ENCODE measurements at regions of chr19 and their contacts with region 1.

Region 1: GRCh38 chr19:12052497-12053169 is at the start of gene ZNF878:
- H3K4me3 Mint-ChIP-seq: peak within 1 kb of the TSS; percentile 82
- H3K27ac Mint-ChIP-seq: peak within 1 kb of the TSS; percentile 34
- H3K4me1 Mint-ChIP-seq: peaks cover 22% of the 10 kb centered on the region
- H3K27me3 Mint-ChIP-seq: peaks cover 55% of the 10 kb centered on the region

Region 2: GRCh38 chr19:11887611-11888531 is 164.8 kb before region 1 on chr19 and contains the start of gene ZNF69:
- intact Hi-C with region 1: loop called (anchors 10 kb)
- H3K4me3 Mint-ChIP-seq: peak within 1 kb of the TSS; percentile 91
- H3K27ac Mint-ChIP-seq: peak within 1 kb of the TSS; percentile 93
- H3K4me1 Mint-ChIP-seq: peaks cover 30% of the 10 kb centered on the region
- H3K27me3 Mint-ChIP-seq: no peaks in the 10 kb centered on the region

Region 3: GRCh38 chr19:11964858-11965645 is 87.6 kb before region 1 on chr19 and contains the start of gene ZNF763:
- intact Hi-C with region 1: loop called (anchors 5 kb)
- H3K4me3 Mint-ChIP-seq: peak within 1 kb of the TSS; percentile 93
- H3K27ac Mint-ChIP-seq: peak within 1 kb of the TSS; percentile 92
- H3K4me1 Mint-ChIP-seq: peaks cover 42% of the 10 kb centered on the region
- H3K27me3 Mint-ChIP-seq: no peaks in the 10 kb centered on the region

Region 4: GRCh38 chr19:12035220-12036153 is 17.1 kb before region 1 on chr19 and contains the start of gene ZNF433:
- intact Hi-C with region 1: loop called (anchors 2 kb)
- H3K4me3 Mint-ChIP-seq: peak within 1 kb of the TSS; percentile 96
- H3K27ac Mint-ChIP-seq: peak within 1 kb of the TSS; percentile 87
- H3K4me1 Mint-ChIP-seq: peaks cover 26% of the 10 kb centered on the region
- H3K27me3 Mint-ChIP-seq: peaks cover 9% of the 10 kb centered on the region